AG04449 (cell line): ENCODE measurements at regions of chr1 and their contacts with region 1.

Region 1: DNA sequence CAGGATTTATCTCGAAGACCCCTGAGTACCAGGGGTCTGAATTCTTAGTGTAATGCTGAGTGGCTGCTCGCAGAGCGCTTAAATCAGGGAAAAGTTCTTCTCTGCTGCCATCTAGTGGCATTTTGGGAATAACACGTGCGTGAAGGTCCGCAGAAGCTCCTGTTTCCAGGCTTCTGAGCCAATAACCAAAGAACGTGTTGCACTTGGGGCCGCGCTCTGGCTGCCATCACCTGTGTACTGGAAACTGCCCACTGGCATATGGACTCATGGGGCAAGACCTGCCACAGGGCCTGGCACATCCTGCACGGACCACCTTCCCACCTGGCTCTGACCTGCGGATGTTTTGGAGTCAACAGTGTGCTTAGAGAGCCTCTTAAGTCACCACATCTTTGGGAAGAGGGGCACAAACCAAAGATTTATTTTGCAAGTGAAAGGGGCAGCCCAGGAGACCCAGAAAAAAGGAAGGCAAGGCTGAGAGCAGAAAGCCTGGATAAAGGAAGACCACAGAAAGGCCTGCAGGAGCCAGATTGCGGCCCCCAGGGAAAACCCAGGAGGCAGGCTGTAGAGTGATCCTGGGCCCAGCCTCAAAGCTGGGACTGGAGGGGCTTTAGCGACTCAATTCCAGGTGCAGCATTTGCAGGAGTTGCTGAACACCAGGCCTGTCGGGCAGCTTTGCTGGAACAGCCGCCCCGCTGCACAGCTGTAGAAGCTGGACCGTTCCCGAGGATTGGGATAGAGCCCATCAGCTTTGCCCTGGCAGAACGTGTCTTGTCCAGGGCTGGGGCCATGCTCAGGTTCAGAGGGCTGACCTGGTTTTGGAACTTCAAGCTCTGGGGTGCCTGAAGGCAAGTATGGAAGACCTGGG is 13.0 kb downstream of the CHIT1 start:
- DNase-seq: no peak
- H3K4me3 ChIP-seq: no peak overlapping the region
- CTCF ChIP-seq: peak; percentile 56

Region 2: GRCh38 chr1:203046984-203047630 is 169.4 kb before region 1 on chr1:
- CTCF ChIA-PET with region 1: interaction called, 392 read pairs
- POLR2A ChIA-PET with region 1: no interaction called
- DNase-seq: peak; percentile 21
- H3K4me3 ChIP-seq: no peak overlapping the region
- CTCF ChIP-seq: no peak

Region 3: DNA sequence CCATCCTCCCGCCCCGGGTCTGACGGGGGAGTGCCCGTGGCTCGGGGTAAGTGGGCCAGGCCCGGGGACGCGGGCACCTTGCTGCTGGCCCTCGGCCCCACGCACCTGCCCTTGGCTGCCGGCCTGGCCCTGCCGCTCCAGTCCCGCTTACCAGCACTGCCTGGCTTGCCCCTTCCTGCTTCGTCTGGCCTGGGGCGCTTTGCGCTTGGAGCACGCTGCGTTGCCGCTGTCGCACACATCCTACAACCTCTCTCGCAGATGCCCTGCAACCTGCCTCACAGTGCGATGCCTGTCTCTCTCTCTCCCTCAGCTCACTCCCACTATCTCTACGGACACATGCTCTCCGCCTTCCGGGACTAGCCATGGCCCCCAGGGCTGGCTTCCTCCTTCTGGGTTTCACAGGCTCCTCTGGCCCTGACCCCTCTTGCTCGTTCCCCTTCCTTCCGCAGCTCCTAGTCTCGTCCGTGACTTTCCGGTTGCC is 140.4 kb before region 1 on chr1:
- CTCF ChIA-PET with region 1: interaction called, 16 read pairs
- POLR2A ChIA-PET with region 1: interaction called, 3 read pairs
- DNase-seq: no peak
- H3K4me3 ChIP-seq: no peak overlapping the region
- CTCF ChIP-seq: no peak

Region 4: DNA sequence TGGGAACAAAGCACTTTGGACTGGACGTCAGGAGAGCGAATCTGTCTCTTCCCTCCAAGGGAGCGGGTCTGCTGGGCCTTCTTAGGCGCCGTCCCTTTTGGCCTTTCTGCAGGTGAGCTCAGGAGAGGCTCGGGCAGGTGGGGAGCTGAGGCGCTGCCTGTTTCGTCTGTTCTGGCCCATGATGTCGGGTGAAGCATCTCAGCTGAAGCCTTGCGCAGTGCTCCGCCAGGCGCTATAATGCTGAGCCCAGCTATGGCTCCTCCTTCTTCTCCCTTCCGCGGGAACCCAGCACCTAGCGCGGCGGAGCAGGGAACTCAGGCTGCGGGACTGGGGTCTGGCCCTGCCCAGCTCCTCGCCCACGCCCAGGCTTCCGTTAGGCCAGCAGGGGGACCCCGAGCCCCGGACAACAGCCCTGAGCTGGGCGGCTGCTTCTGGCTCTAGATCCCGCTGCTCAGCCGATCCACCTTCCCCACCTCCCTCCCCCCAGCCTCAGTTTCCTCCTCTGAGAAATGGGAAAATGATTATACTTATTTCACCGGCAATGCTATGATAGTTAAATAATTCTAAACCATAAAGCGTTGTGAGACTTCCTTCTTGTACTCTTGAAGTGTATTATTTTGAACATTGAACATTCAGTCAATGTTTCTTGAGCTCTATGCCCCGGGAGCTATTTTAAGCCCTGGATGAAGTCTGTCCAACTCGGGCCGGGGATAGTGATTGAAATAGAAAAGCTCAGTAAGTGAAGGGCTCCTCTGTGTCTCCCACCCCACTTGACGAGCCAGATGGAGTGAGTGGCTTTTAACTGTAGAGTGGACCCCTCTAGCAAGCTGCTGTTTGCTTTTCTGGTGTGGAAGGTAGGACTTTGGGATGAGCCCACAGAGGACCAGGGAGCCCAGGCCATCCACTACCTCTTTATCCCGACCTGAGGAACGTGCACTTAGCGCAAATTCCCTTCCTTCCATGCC is 98.6 kb before region 1 on chr1:
- CTCF ChIA-PET with region 1: interaction called, 594 read pairs
- POLR2A ChIA-PET with region 1: no interaction called
- DNase-seq: no peak
- H3K4me3 ChIP-seq: no peak overlapping the region
- CTCF ChIP-seq: peak; percentile 96

Region 5: DNA sequence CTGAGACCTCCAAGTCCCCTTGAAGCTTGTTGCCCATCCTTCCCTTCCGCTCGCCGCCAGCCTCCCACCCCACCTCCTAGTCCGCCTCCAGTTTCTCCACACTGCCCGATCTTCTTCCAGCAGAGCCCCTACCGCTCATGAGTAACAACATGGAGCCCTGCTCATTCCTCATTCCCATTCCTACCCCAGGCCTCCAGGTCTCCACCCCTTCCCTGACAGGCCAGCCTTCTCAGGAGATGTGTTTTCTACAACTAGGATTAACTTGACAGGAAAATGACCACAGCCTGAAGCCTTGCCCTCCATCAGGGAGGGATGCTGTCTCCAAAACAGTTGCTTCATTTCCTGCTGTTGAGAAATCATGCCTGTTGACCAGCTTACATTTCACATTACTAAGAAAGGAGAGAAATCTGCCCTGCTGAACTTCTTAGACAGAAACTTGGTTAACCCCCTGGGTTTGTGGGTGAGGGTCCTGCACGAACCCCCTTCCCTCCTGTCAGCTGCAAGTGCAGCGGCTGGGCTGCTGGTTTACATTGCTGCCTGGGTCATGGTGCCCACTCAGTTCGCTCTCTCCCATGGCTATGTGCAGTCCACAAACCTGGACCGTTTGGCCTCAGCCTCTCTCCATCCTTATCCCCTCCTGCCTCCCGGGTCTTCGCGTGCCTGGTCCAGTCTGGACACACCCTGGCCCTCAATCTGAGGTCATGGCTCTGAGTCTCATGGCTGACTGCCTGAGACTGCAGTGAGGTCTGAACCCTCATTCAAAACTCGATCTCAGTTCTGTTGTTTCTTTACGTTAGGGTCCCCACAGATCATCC is 13.9 kb before region 1 on chr1:
- CTCF ChIA-PET with region 1: interaction called, 62 read pairs
- POLR2A ChIA-PET with region 1: no interaction called
- DNase-seq: no peak
- H3K4me3 ChIP-seq: no peak overlapping the region
- CTCF ChIP-seq: no peak